CD8-positive, alpha-beta T cell (primary cell): ENCODE measurements at regions of chr4 and their contacts with region 1.

Region 1: DNA sequence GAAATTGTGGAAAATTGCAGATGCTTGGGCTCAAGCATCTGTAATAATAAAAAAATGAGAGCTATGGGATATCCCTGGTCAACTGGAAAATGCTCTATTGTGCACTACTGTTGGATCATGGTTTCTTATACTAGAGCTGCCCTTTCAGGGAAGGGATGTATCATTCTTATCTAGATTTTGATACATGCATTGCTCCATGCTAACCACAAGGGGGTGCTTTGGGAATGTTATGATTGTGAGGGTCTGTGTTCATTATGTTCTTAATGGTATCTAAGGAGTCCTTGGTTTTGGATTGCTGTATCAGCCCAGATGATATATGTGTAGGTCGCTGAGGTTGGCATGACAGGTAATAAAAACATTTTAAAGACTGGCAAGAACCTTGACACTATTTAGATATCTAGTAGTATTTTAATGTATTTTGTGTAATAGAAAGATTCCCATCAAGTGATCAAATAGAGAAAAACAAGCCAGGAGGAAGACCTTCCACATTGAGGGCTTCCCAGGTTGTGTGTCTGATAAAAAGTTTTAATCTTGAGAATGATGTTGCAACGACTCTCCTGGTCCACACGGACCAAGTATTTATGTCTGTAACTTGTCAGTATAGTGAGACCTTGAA is 49.2 kb upstream of the TLR2 start:
- DNase-seq: peak in 2 of 9 experiments; percentile 25 to 47
- ATAC-seq: peak; percentile 62
- H3K4me3 ChIP-seq: no peak overlapping the region
- H3K4me3 Mint-ChIP-seq: no peak overlapping the region
- H3K27ac ChIP-seq: no peak overlapping the region
- H3K27ac Mint-ChIP-seq: no peak overlapping the region
- H3K4me1 ChIP-seq: no peaks in the 10 kb centered on the region
- H3K4me1 Mint-ChIP-seq: no peaks in the 10 kb centered on the region
- H3K27me3 ChIP-seq: no peaks in the 10 kb centered on the region
- H3K27me3 Mint-ChIP-seq: no peaks in the 10 kb centered on the region
- CTCF ChIP-seq: peak; percentile 55

Region 2: GRCh38 chr4:151687021-151687640 is 1947.7 kb before region 1 on chr4:
- CTCF ChIA-PET with region 1: no interaction called
- POLR2A ChIA-PET with region 1: no interaction called
- intact Hi-C with region 1: no loop called
- DNase-seq: no peak
- ATAC-seq: no peak
- H3K4me3 ChIP-seq: no peak overlapping the region
- H3K4me3 Mint-ChIP-seq: no peak overlapping the region
- H3K27ac ChIP-seq: no peak overlapping the region
- H3K27ac Mint-ChIP-seq: no peak overlapping the region
- H3K4me1 ChIP-seq: no peaks in the 10 kb centered on the region
- H3K4me1 Mint-ChIP-seq: no peaks in the 10 kb centered on the region
- H3K27me3 ChIP-seq: no peaks in the 10 kb centered on the region
- H3K27me3 Mint-ChIP-seq: no peaks in the 10 kb centered on the region
- CTCF ChIP-seq: no peak

Region 3: GRCh38 chr4:153649572-153649991 is 14.7 kb after region 1 on chr4:
- CTCF ChIA-PET with region 1: interaction called, 29 read pairs
- POLR2A ChIA-PET with region 1: no interaction called
- intact Hi-C with region 1: no loop called
- DNase-seq: no peak
- ATAC-seq: no peak
- H3K4me3 ChIP-seq: no peak overlapping the region
- H3K4me3 Mint-ChIP-seq: no peak overlapping the region
- H3K27ac ChIP-seq: no peak overlapping the region
- H3K27ac Mint-ChIP-seq: no peak overlapping the region
- H3K4me1 ChIP-seq: peaks cover 19% of the 10 kb centered on the region
- H3K4me1 Mint-ChIP-seq: peaks cover 19% of the 10 kb centered on the region
- H3K27me3 ChIP-seq: no peaks in the 10 kb centered on the region
- H3K27me3 Mint-ChIP-seq: no peaks in the 10 kb centered on the region
- CTCF ChIP-seq: no peak

Region 4: GRCh38 chr4:153750197-153750817 is 115.5 kb after region 1 on chr4:
- CTCF ChIA-PET with region 1: interaction called, 33 read pairs
- POLR2A ChIA-PET with region 1: no interaction called
- intact Hi-C with region 1: loop called in 1 of 2 experiments (anchors 1 kb)
- DNase-seq: peak; percentile 21 to 70 (median 56)
- ATAC-seq: peak; percentile 64
- H3K4me3 ChIP-seq: no peak overlapping the region
- H3K4me3 Mint-ChIP-seq: no peak overlapping the region
- H3K27ac ChIP-seq: no peak overlapping the region
- H3K27ac Mint-ChIP-seq: no peak overlapping the region
- H3K4me1 ChIP-seq: peaks cover 10% of the 10 kb centered on the region
- H3K4me1 Mint-ChIP-seq: peaks cover 12% of the 10 kb centered on the region
- H3K27me3 ChIP-seq: no peaks in the 10 kb centered on the region
- H3K27me3 Mint-ChIP-seq: peaks cover 4% of the 10 kb centered on the region
- CTCF ChIP-seq: peak; percentile 76